Activated CD4-positive, alpha-beta T cell treated with anti-CD3 and anti-CD28 coated beads, Interleukin-2, amount 10 ng/mL, durations not matched to agents 24 days and 14 days (primary cell): ENCODE measurements at regions of chr1 and their contacts with region 1.

Region 1: DNA sequence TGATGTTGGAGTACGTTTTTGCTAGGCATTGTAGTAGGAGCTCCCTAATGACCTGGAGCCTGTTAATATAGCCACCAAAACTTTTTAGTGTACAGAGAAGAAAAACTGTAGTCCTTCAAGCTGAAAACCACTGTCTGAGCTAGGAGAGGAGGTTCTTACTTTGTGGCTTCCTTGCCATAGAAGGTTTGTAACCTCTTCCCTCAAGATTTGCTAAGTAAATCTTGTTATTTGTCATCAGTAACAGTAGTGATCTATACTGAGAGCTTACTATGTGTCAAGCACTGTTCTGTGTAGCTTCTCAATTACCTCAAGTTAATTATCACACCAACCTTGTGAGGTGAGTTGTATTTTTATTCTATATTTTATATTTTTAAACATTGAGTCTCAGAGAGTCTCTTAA is 21.2 kb upstream of the LRRC8C start:
- DNase-seq: peak; percentile 82
- H3K4me3 Mint-ChIP-seq: peak overlapping the region; percentile 88
- H3K27ac Mint-ChIP-seq: peak overlapping the region; percentile 99
- H3K4me1 Mint-ChIP-seq: peaks cover 68% of the 10 kb centered on the region
- H3K27me3 Mint-ChIP-seq: no peaks in the 10 kb centered on the region

Region 2: GRCh38 chr1:89994805-89995597 is 383.3 kb after region 1 on chr1 and contains the start of gene ZNF326:
- intact Hi-C with region 1: loop called (anchors 2 kb)
- DNase-seq: peak; percentile 99
- H3K4me3 Mint-ChIP-seq: peak within 1 kb of the TSS; percentile 94
- H3K27ac Mint-ChIP-seq: peak within 1 kb of the TSS; percentile 98
- H3K4me1 Mint-ChIP-seq: peaks cover 35% of the 10 kb centered on the region
- H3K27me3 Mint-ChIP-seq: peaks cover 6% of the 10 kb centered on the region
- total RNA-seq, gene ZNF326: 36.8 and 38.1 TPM in 2 replicates